Naive thymus-derived CD4-positive, alpha-beta T cell (primary cell): ENCODE measurements at regions of chr17 and their contacts with region 1.

Region 1: DNA sequence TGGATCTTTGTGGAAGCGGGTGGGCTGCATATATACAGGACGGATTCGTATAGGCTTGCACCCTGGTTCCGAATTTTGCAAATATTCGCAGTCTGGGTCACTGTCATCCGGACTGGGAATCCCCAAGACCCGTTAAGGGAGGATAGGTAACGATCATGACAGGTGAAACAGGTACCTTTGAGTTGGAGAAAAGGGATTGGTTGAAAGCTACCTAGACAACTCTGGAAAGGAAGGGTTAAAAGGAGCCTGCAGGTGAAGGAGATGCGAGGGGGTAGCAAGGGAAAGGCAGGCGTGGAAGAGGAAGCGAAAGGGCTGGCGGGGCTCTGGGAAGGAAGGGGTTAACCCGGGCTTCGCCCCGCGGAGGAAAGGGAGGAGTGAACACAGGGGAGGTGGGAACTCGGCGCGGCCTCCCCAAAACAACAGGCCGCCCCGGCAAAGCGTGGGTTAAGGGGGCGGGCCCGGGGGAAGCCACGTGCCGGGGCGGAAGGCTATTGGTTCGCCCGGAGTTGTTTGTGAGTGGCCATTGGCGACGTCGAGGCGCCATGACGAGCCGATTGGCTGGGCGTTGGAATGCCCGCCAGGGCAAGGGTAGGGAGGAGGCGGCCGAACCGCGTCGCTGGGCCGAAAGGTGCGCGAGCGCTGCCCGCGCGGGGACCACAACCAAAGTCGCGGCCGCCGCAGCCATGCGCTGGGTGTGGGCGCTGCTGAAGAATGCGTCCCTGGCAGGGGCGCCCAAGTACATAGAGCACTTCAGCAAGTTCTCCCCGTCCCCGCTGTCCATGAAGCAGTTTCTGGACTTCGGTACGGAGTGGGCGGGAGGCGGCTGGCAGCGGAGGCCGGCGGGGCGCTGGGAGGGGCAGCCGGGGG is at the start of gene PDK2:
- DNase-seq: peak; percentile 92 to 99 (median 97)
- ATAC-seq: peak; percentile 98
- H3K4me3 ChIP-seq: peak within 1 kb of the TSS; percentile 92
- H3K4me3 Mint-ChIP-seq: peak within 1 kb of the TSS; percentile 91 to 100 (median 96)
- H3K27ac ChIP-seq: peak within 1 kb of the TSS; percentile 84
- H3K27ac Mint-ChIP-seq: peak within 1 kb of the TSS; percentile 87 to 98 (median 95)
- H3K4me1 ChIP-seq: peaks cover 12 to 14% of the 10 kb centered on the region in 2 donors
- H3K4me1 Mint-ChIP-seq: peaks cover 27 to 41% (median 32%) of the 10 kb centered on the region in 7 donors
- H3K27me3 ChIP-seq: no peaks in the 10 kb centered on the region
- H3K27me3 Mint-ChIP-seq: no peaks in the 10 kb centered on the region
- total RNA-seq, gene PDK2: 16.7 to 48.3 (median 22.5) TPM

Region 2: GRCh38 chr17:49414622-49415350 is 680.2 kb before region 1 on chr17 and contains the start of gene PHB1:
- CTCF ChIA-PET with region 1: no interaction called
- POLR2A ChIA-PET with region 1: no interaction called
- intact Hi-C with region 1: loop called in 1 of 2 experiments (anchors 1 kb)
- DNase-seq: peak; percentile 75 to 98 (median 93)
- ATAC-seq: peak; percentile 99
- H3K4me3 ChIP-seq: peak within 1 kb of the TSS; percentile 77
- H3K4me3 Mint-ChIP-seq: peak within 1 kb of the TSS; percentile 92 to 99 (median 96)
- H3K27ac ChIP-seq: peak within 1 kb of the TSS; percentile 77
- H3K27ac Mint-ChIP-seq: peak within 1 kb of the TSS; percentile 78 to 99 (median 92)
- H3K4me1 ChIP-seq: peaks cover 8% of the 10 kb centered on the region in 2 donors
- H3K4me1 Mint-ChIP-seq: peaks cover 11 to 30% (median 26%) of the 10 kb centered on the region in 7 donors
- H3K27me3 ChIP-seq: no peaks in the 10 kb centered on the region
- H3K27me3 Mint-ChIP-seq: peaks cover 0 to 3% (median 0%) of the 10 kb centered on the region in 5 donors
- total RNA-seq, gene PHB1: 50.0 to 186 (median 54.4) TPM

Region 3: DNA sequence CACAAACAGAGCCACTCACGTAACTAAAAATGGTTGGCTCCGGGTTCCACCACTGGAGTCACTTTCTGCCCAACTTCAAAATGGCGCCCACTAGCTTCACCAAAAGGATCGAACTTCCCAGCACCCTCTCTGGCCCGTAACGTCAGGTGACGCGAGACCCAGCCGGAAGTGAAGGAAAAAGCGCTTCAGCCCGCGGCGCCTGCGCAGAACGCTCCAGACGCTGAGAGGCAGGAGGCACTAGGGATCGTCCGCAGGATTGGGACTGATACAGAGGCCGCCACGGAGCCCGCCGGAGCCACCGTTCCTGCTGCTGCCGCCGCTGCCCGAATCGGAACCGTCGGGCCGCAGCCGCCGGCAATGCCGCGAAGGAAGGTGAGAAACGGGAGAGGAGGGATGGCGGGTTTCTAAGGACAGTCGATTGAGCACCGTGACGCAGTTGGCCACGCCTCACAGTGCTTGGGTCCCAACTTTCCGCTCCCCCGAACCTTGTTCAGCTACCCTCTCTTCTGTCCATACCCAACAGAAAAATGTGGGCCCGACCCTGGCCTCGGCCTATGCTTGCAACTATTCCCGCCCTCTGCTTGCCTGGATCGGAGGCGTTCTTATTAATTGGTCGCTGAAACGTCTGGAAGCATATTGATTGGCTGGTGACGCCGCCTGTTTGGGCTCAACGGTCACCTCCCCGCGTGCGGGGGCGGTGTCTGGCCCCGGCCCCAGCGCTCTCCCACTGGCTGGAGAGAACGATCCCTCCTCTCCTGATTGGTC is 306.3 kb before region 1 on chr17 and contains the start of gene KAT7:
- CTCF ChIA-PET with region 1: no interaction called
- POLR2A ChIA-PET with region 1: interaction called, 6 read pairs
- intact Hi-C with region 1: loop called in 1 of 2 experiments (anchors 1 kb)
- DNase-seq: peak; percentile 90 to 99 (median 99)
- ATAC-seq: peak; percentile 90
- H3K4me3 ChIP-seq: peak within 1 kb of the TSS; percentile 98
- H3K4me3 Mint-ChIP-seq: peak within 1 kb of the TSS; percentile 92 to 99 (median 96)
- H3K27ac ChIP-seq: peak within 1 kb of the TSS; percentile 98
- H3K27ac Mint-ChIP-seq: peak within 1 kb of the TSS; percentile 91 to 99 (median 98)
- H3K4me1 ChIP-seq: peaks cover 17 to 30% of the 10 kb centered on the region in 2 donors
- H3K4me1 Mint-ChIP-seq: peaks cover 39 to 62% (median 58%) of the 10 kb centered on the region in 7 donors
- H3K27me3 ChIP-seq: no peaks in the 10 kb centered on the region
- H3K27me3 Mint-ChIP-seq: peaks cover 0 to 8% (median 0%) of the 10 kb centered on the region in 5 donors
- total RNA-seq, gene KAT7: 85.6 to 195 (median 132) TPM

Region 4: GRCh38 chr17:50026901-50027630 is 67.9 kb before region 1 on chr17:
- CTCF ChIA-PET with region 1: interaction called, 57 read pairs
- POLR2A ChIA-PET with region 1: interaction called, 6 read pairs
- intact Hi-C with region 1: loop called in 1 of 2 experiments (anchors 2 kb)
- DNase-seq: peak; percentile 33 to 81 (median 69)
- ATAC-seq: peak; percentile 80
- H3K4me3 ChIP-seq: no peak overlapping the region
- H3K4me3 Mint-ChIP-seq: peak overlapping the region in 7 of 10 donors; percentile 17 to 74 (median 54)
- H3K27ac ChIP-seq: no peak overlapping the region
- H3K27ac Mint-ChIP-seq: no peak overlapping the region
- H3K4me1 ChIP-seq: peaks cover 0 to 8% of the 10 kb centered on the region in 2 donors
- H3K4me1 Mint-ChIP-seq: peaks cover 5 to 13% (median 10%) of the 10 kb centered on the region in 7 donors
- H3K27me3 ChIP-seq: peaks cover 0 to 6% of the 10 kb centered on the region in 2 donors
- H3K27me3 Mint-ChIP-seq: peaks cover 20 to 33% (median 25%) of the 10 kb centered on the region in 5 donors

Region 5: DNA sequence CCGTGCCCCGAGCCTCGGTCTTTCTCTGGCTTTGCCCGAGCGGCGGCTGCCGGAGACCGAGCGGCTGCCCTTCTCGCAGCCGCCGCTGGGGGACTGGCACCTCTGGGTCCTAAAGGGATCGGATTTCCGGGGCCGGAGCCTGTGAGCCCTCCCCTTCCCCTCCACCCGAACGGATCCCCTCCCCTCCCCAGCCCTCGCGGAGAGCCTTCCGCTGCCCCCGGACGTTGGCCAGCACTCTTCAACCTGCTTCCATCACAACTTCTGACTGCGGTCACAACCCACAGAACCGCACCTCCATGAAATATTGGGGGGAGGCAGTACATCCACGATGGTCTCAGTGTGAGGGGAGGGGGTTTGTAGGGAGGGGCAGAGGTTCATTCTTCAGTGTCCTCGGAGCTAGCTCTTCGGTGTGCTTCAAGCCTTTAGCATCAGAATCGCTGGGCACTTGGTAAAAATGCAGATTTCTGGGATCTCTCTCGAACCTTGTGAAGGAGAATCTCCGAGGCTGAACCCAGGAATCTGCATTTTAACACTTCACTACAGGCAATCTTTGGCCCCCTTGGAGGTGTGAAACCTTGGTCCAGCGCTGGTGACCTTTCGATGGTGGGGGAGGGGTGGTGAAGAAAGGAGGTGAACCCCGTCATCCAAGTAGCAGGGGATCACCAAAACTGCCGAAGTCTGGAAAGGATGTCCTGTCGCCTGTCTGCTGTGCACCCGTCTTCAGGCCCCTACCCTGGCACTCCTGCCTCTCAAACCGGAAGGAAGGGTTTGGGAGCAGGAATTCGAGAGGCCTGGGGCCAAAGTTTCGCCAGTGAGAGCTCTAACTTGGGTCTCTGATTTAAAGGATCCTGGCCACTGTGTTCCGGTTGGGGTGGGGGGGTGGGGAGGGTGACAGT is 56.3 kb after region 1 on chr17:
- CTCF ChIA-PET with region 1: interaction called, 5 read pairs
- POLR2A ChIA-PET with region 1: interaction called, 7 read pairs
- intact Hi-C with region 1: loop called (anchors 1 kb)
- DNase-seq: peak; percentile 73 to 88 (median 79)
- ATAC-seq: peak; percentile 84
- H3K4me3 ChIP-seq: peak overlapping the region; percentile 94
- H3K4me3 Mint-ChIP-seq: peak overlapping the region; percentile 82 to 95 (median 87)
- H3K27ac ChIP-seq: peak overlapping the region; percentile 74
- H3K27ac Mint-ChIP-seq: peak overlapping the region; percentile 71 to 96 (median 84)
- H3K4me1 ChIP-seq: peaks cover 26 to 37% of the 10 kb centered on the region in 2 donors
- H3K4me1 Mint-ChIP-seq: peaks cover 11 to 52% (median 44%) of the 10 kb centered on the region in 7 donors
- H3K27me3 ChIP-seq: no peaks in the 10 kb centered on the region
- H3K27me3 Mint-ChIP-seq: no peaks in the 10 kb centered on the region

Region 6: GRCh38 chr17:50200457-50201275 is 105.7 kb after region 1 on chr17:
- CTCF ChIA-PET with region 1: interaction called, 8 read pairs
- POLR2A ChIA-PET with region 1: no interaction called
- intact Hi-C with region 1: loop called (anchors 1 kb)
- DNase-seq: peak; percentile 66 to 84 (median 78)
- ATAC-seq: peak; percentile 80
- H3K4me3 ChIP-seq: peak overlapping the region; percentile 61
- H3K4me3 Mint-ChIP-seq: peak overlapping the region; percentile 70 to 87 (median 76)
- H3K27ac ChIP-seq: peak overlapping the region; percentile 26
- H3K27ac Mint-ChIP-seq: peak overlapping the region in 7 of 9 donors; percentile 47 to 92 (median 87)
- H3K4me1 ChIP-seq: peaks cover 12% of the 10 kb centered on the region in 2 donors
- H3K4me1 Mint-ChIP-seq: peaks cover 6 to 27% (median 25%) of the 10 kb centered on the region in 7 donors
- H3K27me3 ChIP-seq: peaks cover 5 to 13% of the 10 kb centered on the region in 2 donors
- H3K27me3 Mint-ChIP-seq: peaks cover 43 to 70% (median 49%) of the 10 kb centered on the region in 5 donors

Region 7: GRCh38 chr17:50238601-50239280 is 143.8 kb after region 1 on chr17:
- CTCF ChIA-PET with region 1: no interaction called
- POLR2A ChIA-PET with region 1: no interaction called
- intact Hi-C with region 1: no loop called
- DNase-seq: no peak
- ATAC-seq: no peak
- H3K4me3 ChIP-seq: no peak overlapping the region
- H3K4me3 Mint-ChIP-seq: no peak overlapping the region
- H3K27ac ChIP-seq: no peak overlapping the region
- H3K27ac Mint-ChIP-seq: no peak overlapping the region
- H3K4me1 ChIP-seq: no peaks in the 10 kb centered on the region
- H3K4me1 Mint-ChIP-seq: peaks cover 0 to 10% (median 0%) of the 10 kb centered on the region in 7 donors
- H3K27me3 ChIP-seq: no peaks in the 10 kb centered on the region
- H3K27me3 Mint-ChIP-seq: peaks cover 26 to 54% (median 43%) of the 10 kb centered on the region in 5 donors

Region 8: DNA sequence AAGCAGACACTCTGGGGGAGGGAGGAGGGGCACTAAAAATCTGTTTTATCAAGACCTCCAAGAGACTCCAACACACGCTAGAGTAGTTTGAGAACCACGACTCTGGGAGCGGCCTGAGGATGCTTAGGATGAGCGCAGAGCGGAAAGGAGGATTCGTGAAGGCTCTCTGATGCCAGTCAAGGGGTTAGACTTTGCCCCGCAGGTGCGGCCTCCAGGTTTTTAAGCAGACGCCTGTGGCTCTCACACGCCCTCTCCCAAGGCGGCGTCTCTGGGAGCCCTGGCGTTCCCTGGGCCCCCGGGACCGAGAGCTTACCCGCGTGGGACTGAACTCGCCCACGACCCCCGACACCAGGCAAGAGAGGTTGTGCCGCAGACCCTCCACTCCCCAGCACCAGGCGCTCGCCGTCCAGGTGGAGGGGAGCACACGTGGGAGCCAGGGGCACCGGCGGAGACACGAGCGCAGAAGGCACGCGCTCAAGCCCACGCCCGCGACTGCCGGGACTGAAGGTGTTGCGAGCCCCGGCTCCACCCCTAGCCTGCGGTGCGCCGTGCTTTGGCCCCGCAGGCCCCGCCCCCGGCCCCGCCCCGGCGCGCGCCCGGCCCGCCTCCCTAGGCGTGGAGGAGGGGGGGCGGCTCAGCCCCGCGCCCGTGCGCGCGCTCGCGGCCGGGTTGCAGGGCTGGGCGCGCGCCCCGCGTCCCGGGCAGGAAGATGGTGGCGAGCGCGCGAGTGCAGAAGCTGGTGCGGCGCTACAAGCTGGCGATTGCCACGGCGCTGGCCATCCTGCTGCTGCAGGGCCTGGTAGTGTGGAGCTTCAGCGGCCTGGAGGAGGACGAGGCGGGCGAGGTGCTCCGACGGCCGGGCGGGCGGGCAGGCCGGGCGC is 250.7 kb after region 1 on chr17 and contains the start of gene XYLT2:
- CTCF ChIA-PET with region 1: no interaction called
- POLR2A ChIA-PET with region 1: interaction called, 3 read pairs
- intact Hi-C with region 1: loop called in 1 of 2 experiments (anchors 1 kb)
- DNase-seq: peak; percentile 89 to 98 (median 93)
- ATAC-seq: peak; percentile 98
- H3K4me3 ChIP-seq: peak within 1 kb of the TSS; percentile 79
- H3K4me3 Mint-ChIP-seq: peak within 1 kb of the TSS; percentile 77 to 94 (median 91)
- H3K27ac ChIP-seq: peak within 1 kb of the TSS; percentile 84
- H3K27ac Mint-ChIP-seq: peak within 1 kb of the TSS; percentile 85 to 95 (median 90)
- H3K4me1 ChIP-seq: peaks cover 22% of the 10 kb centered on the region in 2 donors
- H3K4me1 Mint-ChIP-seq: peaks cover 17 to 45% (median 34%) of the 10 kb centered on the region in 7 donors
- H3K27me3 ChIP-seq: no peaks in the 10 kb centered on the region
- H3K27me3 Mint-ChIP-seq: no peaks in the 10 kb centered on the region
- total RNA-seq, gene XYLT2: 18.6 to 43.7 (median 34.1) TPM